Adrenal gland (tissue), 19 donors: ENCODE measurements at regions of chr1 and their contacts with region 1.

Region 1: DNA sequence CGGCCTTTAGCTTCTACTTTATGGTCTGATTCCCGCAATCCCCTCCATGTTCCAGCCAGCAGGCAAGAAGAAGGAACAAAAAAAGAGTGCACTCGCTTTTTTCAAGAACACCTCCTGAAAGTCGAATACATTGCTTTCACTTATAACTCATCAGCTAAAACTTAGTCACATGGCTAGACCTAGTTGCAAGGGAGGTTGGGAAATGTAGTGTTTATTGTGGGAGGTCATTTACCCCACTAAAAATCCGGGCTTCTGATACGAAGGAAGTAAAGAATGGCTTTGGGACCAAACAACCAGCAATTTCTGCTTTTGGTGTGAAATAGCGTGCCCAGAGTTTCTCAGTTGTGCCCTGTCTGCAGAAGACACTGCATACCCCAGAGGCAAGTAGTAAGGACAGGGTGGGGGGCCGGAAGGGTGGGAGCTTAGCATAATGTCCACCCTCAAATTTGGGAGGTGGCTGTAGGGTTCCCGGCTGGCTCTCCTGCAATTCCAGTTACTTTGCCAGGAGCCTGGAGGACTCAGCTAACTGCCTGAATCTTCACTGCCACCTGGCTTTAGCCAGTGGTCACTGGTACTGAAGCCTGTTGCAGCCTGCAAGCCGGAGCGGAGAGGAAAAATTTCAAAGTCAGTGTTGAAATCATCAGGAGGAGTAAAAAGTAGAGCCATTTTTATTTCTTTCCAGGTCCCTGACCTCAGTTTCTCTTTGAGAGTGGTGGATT is 57.7 kb upstream of the F3 start:
- DNase-seq: peak; percentile 59 to 87 (median 75)
- H3K4me3 ChIP-seq: no peak overlapping the region
- H3K27ac ChIP-seq: peak overlapping the region in 1 of 5 donors; percentile 54
- H3K4me1 ChIP-seq: no peaks in the 10 kb centered on the region
- H3K27me3 ChIP-seq: no peaks in the 10 kb centered on the region
- CTCF ChIP-seq: peak; percentile 47 to 77 (median 71)
- POLR2A ChIP-seq: no peak

Region 2: GRCh38 chr1:94532077-94532476 is 67.2 kb before region 1 on chr1:
- intact Hi-C with region 1: loop called (anchors 5 to 10 kb)
- DNase-seq: no peak
- H3K4me3 ChIP-seq: no peak overlapping the region
- H3K27ac ChIP-seq: no peak overlapping the region
- H3K4me1 ChIP-seq: peaks cover 5 to 9% of the 10 kb centered on the region in 2 donors
- H3K27me3 ChIP-seq: no peaks in the 10 kb centered on the region
- CTCF ChIP-seq: peak in 1 of 6 experiments; percentile 13
- POLR2A ChIP-seq: no peak

Region 3: DNA sequence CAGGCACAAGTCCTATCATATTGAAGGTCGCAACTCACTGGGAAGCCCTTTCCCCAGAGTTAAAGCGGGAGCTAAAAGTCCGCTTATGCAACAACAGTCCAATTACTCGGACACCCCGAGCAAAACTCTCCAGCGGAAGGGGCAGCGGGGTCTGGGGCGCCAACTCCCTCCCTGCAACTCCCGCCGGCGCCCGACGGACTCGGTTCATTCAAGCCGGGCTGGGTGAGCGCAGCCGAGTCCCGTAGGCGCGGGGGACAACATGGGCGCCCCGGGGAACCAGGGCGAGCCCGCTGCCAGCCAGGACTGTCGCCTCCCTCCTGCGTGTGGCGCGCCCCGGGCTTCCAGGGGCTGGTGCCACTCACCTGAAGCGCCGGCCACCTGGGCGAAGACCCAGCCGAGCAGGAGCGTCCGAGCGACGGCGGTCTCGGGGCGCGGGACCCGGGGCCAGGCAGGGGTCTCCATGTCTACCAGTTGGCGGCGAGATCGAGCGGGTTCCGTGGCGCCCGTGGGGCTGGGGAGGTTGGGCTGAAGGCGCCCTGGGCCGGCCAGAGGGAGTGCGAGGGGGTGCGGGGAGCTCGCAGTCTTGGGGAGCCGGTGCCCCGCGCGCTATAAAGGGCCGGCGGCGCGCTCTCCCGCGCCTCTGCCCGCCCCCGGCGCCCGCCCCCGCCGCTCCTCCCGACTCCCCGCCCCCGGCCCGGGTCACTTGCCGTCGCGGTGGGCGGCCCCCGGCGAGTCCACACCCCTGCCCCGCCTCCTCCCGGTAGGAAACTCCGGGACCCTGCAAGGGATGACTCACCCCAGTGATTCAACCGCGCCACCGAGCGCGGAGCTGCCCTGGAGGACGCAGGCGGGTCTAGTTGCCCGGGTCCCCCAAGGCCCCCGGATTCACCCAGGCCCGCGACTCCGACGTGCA is 57.8 kb before region 1 on chr1 and contains the start of gene F3:
- intact Hi-C with region 1: loop called (anchors 5 to 10 kb)
- DNase-seq: peak; percentile 92 to 96 (median 95)
- H3K4me3 ChIP-seq: peak within 1 kb of the TSS; percentile 62 to 82 (median 69)
- H3K27ac ChIP-seq: peak within 1 kb of the TSS in 4 of 5 donors; percentile 69 to 93 (median 87)
- H3K4me1 ChIP-seq: peaks cover 27 to 61% of the 10 kb centered on the region in 2 donors
- H3K27me3 ChIP-seq: no peaks in the 10 kb centered on the region
- CTCF ChIP-seq: peak in 1 of 6 experiments; percentile 7
- POLR2A ChIP-seq: peak; percentile 66 to 95
- total RNA-seq, gene F3: 11.8 to 38.9 (median 21.3) TPM